B cell (primary cell): ENCODE measurements at regions of chr6 and their contacts with region 1.

Region 1: DNA sequence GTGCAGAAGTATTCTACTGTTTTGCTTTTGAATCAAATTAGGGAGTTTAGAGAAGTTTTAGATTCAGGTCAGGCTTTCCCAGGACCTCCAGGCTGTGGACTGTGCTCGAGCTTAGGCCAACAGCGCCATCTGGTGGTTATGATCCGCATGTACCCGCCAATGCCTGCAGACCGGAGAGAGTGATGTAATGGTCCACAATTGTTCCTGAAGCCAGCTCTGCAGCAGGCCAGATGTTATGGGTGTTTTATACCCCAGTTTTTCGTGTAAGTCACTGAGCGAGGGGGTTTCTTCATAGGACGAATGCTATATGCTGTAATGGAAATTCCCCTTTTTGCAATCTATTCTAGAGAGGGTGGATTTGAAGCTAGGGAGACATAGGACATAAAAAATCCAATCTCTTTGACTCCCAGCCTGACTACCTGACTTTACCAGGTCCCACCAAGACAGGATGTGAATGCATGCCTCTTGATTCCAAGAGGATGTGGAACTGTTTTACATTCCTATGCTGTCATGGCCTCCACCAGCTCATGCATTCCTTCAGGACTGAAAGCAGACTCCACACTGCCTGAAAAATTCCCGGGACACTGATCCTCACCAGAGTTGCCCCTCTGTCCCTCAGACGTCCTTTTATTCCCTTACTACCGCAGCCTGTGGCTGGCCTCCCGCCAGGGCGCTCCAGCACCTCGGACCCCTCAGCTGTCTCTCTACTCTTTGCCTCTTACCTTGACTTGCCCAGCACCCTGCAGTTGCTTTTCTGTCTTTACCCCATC is 41.2 kb upstream of the LY86 start:
- DNase-seq: peak; percentile 89
- ATAC-seq: peak; percentile 86
- H3K4me3 ChIP-seq: peak overlapping the region; percentile 36 to 66 (median 50)
- H3K4me3 Mint-ChIP-seq: peak overlapping the region; percentile 90
- H3K27ac ChIP-seq: no peak overlapping the region
- H3K27ac Mint-ChIP-seq: no peak overlapping the region
- H3K4me1 ChIP-seq: peaks cover 14 to 15% of the 10 kb centered on the region in 2 donors
- H3K4me1 Mint-ChIP-seq: peaks cover 13% of the 10 kb centered on the region
- H3K27me3 ChIP-seq: peaks cover 0 to 34% (median 9%) of the 10 kb centered on the region in 4 experiments
- H3K27me3 Mint-ChIP-seq: peaks cover 33% of the 10 kb centered on the region
- CTCF ChIP-seq: peak; percentile 98

Region 2: GRCh38 chr6:5471044-5471443 is 1076.3 kb before region 1 on chr6:
- CTCF ChIA-PET with region 1: interaction called, 38 read pairs
- POLR2A ChIA-PET with region 1: no interaction called
- intact Hi-C with region 1: loop called (anchors 1 kb)
- DNase-seq: peak; percentile 67
- ATAC-seq: peak; percentile 71
- H3K4me3 ChIP-seq: no peak overlapping the region
- H3K4me3 Mint-ChIP-seq: no peak overlapping the region
- H3K27ac ChIP-seq: no peak overlapping the region
- H3K27ac Mint-ChIP-seq: no peak overlapping the region
- H3K4me1 ChIP-seq: peaks cover 3 to 4% of the 10 kb centered on the region in 2 donors
- H3K4me1 Mint-ChIP-seq: no peaks in the 10 kb centered on the region
- H3K27me3 ChIP-seq: no peaks in the 10 kb centered on the region
- H3K27me3 Mint-ChIP-seq: no peaks in the 10 kb centered on the region
- CTCF ChIP-seq: peak; percentile 91

Region 3: GRCh38 chr6:6221787-6222535 is 325.3 kb before region 1 on chr6:
- CTCF ChIA-PET with region 1: interaction called, 15 read pairs
- POLR2A ChIA-PET with region 1: no interaction called
- intact Hi-C with region 1: loop called (anchors 1 kb)
- DNase-seq: peak; percentile 21
- ATAC-seq: no peak
- H3K4me3 ChIP-seq: no peak overlapping the region
- H3K4me3 Mint-ChIP-seq: no peak overlapping the region
- H3K27ac ChIP-seq: no peak overlapping the region
- H3K27ac Mint-ChIP-seq: no peak overlapping the region
- H3K4me1 ChIP-seq: no peaks in the 10 kb centered on the region
- H3K4me1 Mint-ChIP-seq: no peaks in the 10 kb centered on the region
- H3K27me3 ChIP-seq: peaks cover 0 to 9% (median 3%) of the 10 kb centered on the region in 4 experiments
- H3K27me3 Mint-ChIP-seq: peaks cover 31% of the 10 kb centered on the region
- CTCF ChIP-seq: peak; percentile 13

Region 4: DNA sequence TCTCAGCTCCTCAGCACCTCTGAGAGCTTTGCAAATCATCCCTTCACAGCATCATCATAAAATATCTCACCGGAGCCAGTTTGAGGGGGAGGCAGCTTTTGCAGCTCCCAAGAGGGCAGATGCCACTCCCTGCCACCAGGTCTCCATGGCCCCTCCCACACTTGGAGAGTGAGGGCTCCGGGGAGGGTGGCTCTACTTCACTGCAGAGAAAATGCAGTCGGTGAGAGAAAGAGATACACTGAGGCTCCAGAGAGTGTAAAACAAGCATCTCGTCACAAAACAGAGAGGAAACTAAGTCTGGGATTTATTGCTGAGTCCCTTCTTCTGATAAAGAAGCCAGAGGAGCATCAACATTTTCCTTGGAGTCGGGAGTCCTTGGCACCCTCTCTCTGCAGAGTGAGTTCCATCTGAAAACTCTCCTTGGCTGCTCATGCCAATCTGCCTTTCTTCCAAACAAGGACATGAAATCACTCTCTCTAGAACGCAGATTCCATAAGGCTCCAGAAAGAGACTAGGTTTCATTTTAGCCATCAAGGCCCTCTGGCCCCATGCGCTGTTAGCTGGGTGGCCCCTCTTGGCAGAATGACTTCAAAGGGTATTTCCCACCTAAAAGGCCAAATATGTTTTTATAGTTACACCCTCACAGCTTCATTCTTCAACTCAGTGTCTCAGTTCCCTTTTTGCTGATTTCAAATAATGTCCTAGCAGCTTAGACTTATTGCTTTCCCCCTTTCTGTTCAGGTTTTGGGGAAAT is 156.3 kb before region 1 on chr6:
- CTCF ChIA-PET with region 1: interaction called, 17 read pairs
- POLR2A ChIA-PET with region 1: no interaction called
- intact Hi-C with region 1: loop called (anchors 5 kb)
- DNase-seq: peak; percentile 81
- ATAC-seq: peak; percentile 75
- H3K4me3 ChIP-seq: peak overlapping the region in 3 of 5 experiments; percentile 3 to 36 (median 26)
- H3K4me3 Mint-ChIP-seq: peak overlapping the region; percentile 87
- H3K27ac ChIP-seq: peak overlapping the region; percentile 83 to 92
- H3K27ac Mint-ChIP-seq: peak overlapping the region; percentile 97
- H3K4me1 ChIP-seq: peaks cover 37 to 44% of the 10 kb centered on the region in 2 donors
- H3K4me1 Mint-ChIP-seq: peaks cover 58% of the 10 kb centered on the region
- H3K27me3 ChIP-seq: no peaks in the 10 kb centered on the region
- H3K27me3 Mint-ChIP-seq: peaks cover 3% of the 10 kb centered on the region
- CTCF ChIP-seq: no peak

Region 5: GRCh38 chr6:6525933-6526332 is 21.4 kb before region 1 on chr6:
- CTCF ChIA-PET with region 1: interaction called, 15 read pairs
- POLR2A ChIA-PET with region 1: no interaction called
- intact Hi-C with region 1: no loop called
- DNase-seq: no peak
- ATAC-seq: no peak
- H3K4me3 ChIP-seq: no peak overlapping the region
- H3K4me3 Mint-ChIP-seq: no peak overlapping the region
- H3K27ac ChIP-seq: no peak overlapping the region
- H3K27ac Mint-ChIP-seq: no peak overlapping the region
- H3K4me1 ChIP-seq: no peaks in the 10 kb centered on the region
- H3K4me1 Mint-ChIP-seq: no peaks in the 10 kb centered on the region
- H3K27me3 ChIP-seq: peaks cover 0 to 5% (median 2%) of the 10 kb centered on the region in 4 experiments
- H3K27me3 Mint-ChIP-seq: peaks cover 29% of the 10 kb centered on the region
- CTCF ChIP-seq: no peak